ENCODE measurements at regions of chr3 and their contacts with region 1.

Region 1: DNA sequence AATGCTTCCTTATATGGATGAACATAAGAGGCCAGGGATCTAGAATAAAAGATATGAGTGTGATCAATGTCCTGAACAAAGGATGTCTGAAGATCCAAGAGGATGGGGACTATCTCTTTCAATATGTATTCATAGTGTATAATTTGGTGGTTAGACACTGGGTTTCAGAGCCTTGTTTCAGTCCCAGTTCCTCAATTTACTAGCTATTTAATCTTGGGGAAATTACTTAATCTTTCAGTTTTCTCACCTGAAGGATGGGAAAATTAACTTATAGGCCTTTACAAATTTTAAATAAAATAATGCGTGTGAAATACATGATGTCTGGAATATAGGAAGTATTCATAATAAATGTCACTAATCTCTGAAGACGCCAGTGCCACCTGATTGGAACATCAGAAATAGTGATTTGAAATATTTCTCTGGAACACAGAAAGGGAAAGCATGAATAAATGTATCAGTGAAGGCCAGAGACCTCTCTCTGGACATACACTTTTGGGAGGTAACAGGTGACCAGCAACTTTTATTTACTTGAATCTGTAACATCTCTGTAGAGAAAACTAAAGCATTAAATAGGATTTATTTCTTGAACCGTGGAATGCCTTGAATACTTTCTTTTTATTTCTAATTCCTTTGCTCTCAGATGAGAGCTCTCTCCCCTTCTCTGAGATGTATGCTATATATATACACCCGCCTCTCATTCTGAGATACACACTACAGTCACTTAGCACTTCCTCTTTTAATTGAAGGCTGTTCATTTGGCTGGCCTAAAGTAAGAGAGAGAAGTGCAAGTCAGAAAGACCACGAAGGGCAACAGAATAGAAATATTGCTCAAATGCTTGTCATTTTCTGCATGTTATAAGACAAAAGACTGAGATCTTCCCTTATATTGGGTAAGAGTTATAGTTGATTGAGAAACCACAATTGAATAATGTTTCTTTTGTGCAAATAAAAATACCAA is 407.1 kb downstream of the LSAMP start:
- DNase-seq: peak; percentile 58
- ATAC-seq: peak; percentile 99
- H3K4me3 ChIP-seq: peak overlapping the region; percentile 43; the same call in 1 of the 2 replicates
- H3K27ac ChIP-seq: peak overlapping the region; percentile 65
- H3K4me1 ChIP-seq: peaks cover 14% of the 10 kb centered on the region
- H3K27me3 ChIP-seq: no peaks in the 10 kb centered on the region
- CTCF ChIP-seq: no peak
- EP300 ChIP-seq: peak; percentile 40 to 84; a peak in 3 of 4 replicates
- POLR2A ChIP-seq: no peak
- RAD21 ChIP-seq: 0 out of 2 replicates have a peak, but pooled peaks have one; percentile 27

Region 2: DNA sequence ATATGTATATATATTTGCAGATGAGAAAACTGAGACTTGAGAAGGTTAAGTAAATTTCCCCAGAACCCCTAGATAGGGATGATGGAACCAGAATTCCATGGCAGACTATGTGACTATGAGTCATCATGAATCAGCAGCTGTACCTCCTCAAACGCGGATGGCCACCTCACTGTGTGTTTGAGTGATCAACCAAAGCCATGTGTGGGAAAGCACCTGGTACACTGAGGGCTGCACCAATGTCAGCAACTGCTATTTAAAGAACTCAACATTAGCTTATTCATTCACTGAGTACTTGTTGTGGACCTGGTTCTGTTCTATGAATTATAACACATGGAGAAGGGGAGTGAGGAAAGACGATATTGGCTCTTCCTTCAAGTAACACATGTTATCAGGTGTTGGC is 37.9 kb before region 1 on chr3:
- CTCF ChIA-PET with region 1: no interaction called
- POLR2A ChIA-PET with region 1: no interaction called
- RAD21 ChIA-PET with region 1: interaction called, 5 read pairs
- SMC1A ChIA-PET with region 1: interaction called, 13 read pairs
- in situ Hi-C with region 1: no loop called
- intact Hi-C with region 1: loop called (anchors 5 kb)
- DNase-seq: peak; percentile 37
- ATAC-seq: peak; percentile 94
- H3K4me3 ChIP-seq: no peak overlapping the region
- H3K27ac ChIP-seq: no peak overlapping the region
- H3K4me1 ChIP-seq: peaks cover 13% of the 10 kb centered on the region; the same call in 1 of the 2 replicates
- H3K27me3 ChIP-seq: no peaks in the 10 kb centered on the region
- CTCF ChIP-seq: no peak
- EP300 ChIP-seq: peak in 1 of 2 experiments; percentile 30; a peak in 1 of 4 replicates
- POLR2A ChIP-seq: no peak
- RAD21 ChIP-seq: no peak

Region 3: GRCh38 chr3:116020495-116020894 is 17.7 kb before region 1 on chr3:
- CTCF ChIA-PET with region 1: interaction called, 4 read pairs
- POLR2A ChIA-PET with region 1: interaction called, 3 read pairs
- RAD21 ChIA-PET with region 1: interaction called, 13 read pairs
- SMC1A ChIA-PET with region 1: interaction called, 16 read pairs
- in situ Hi-C with region 1: no loop called
- intact Hi-C with region 1: no loop called
- DNase-seq: peak; percentile 34
- ATAC-seq: peak; percentile 97
- H3K4me3 ChIP-seq: no peak overlapping the region
- H3K27ac ChIP-seq: no peak overlapping the region
- H3K4me1 ChIP-seq: no peaks in the 10 kb centered on the region
- H3K27me3 ChIP-seq: no peaks in the 10 kb centered on the region
- CTCF ChIP-seq: no peak
- EP300 ChIP-seq: peak in 1 of 2 experiments; percentile 32; a peak in 2 of 4 replicates
- POLR2A ChIP-seq: no peak
- RAD21 ChIP-seq: no peak

Region 4: DNA sequence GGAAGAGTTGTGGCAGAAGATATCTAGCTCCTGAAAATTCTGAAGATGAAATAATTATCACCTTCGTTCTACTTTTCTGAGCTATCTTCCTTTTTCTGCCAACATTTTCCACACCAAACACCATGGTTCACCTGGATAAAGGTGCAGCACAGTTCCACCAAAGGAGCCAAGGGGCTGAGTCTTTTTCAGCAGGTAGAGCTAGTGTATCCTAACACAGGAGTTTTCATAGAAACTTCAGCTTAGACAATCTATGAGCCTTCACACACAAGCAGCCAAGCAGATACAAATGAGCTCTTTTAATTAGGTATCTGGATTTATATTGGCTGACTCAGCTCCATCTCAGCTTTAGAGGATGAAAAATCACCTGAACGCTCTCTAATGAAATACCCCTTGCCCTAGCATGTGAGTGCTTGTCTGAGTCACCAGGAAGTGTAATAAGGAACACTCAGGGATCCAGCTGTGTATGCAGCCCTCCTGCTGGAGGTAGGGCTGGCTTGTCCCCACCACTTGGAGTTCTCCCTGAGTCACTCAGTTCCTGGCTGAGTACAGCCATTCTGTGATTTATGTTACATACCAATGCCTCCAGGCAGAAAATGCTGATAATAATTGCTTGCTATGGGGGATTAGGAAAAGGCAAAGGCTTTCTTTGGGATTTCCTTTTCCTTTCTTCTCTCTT is 21.3 kb after region 1 on chr3:
- CTCF ChIA-PET with region 1: interaction called, 3 read pairs
- POLR2A ChIA-PET with region 1: interaction called, 4 read pairs
- RAD21 ChIA-PET with region 1: interaction called, 7 read pairs
- SMC1A ChIA-PET with region 1: interaction called, 16 read pairs
- in situ Hi-C with region 1: no loop called
- intact Hi-C with region 1: no loop called
- DNase-seq: no peak
- ATAC-seq: peak; percentile 15
- H3K4me3 ChIP-seq: no peak overlapping the region
- H3K27ac ChIP-seq: no peak overlapping the region
- H3K4me1 ChIP-seq: peaks cover 18% of the 10 kb centered on the region
- H3K27me3 ChIP-seq: no peaks in the 10 kb centered on the region
- CTCF ChIP-seq: no peak
- EP300 ChIP-seq: no peak
- POLR2A ChIP-seq: no peak
- RAD21 ChIP-seq: no peak